ENCODE measurements at regions of chr18 and their contacts with region 1.

Region 1: DNA sequence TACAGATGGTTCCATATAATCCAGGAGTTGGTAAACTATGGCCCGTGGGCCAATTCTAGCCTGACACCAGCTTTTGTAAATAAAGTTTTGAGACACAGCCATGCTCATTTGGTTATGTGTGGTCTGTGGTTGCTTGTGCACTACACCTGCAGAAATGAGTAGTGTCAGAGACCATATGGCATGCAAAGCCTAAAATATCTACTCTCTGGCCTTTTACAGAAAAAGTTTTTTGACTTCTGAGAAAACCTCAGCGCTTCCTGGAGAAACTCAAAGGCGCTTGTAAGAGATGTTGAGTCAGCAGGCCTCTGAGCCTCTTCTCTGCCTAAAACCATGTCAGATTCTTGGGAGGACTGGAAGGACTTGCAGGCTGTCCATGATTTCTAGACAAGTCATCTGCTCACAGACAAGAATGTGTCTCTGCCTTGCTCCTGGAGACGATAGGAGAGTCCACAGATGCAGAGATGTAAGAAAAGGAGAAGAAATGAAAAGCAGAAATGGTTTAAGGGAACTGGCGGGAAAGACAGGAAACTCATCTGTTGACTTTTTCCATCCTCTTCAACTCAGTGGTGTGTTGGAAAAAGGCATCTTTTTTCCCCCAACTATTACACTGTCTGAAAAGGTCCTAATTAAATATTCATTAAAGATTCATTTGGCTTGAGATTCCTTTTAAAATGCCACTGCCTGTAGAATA is 5.2 kb downstream of the TTC39C start:
- DNase-seq: peak; percentile 91
- H3K4me3 ChIP-seq: peak overlapping the region; percentile 86
- H3K27ac ChIP-seq: peak overlapping the region; percentile 83
- H3K4me1 ChIP-seq: peaks cover 78% of the 10 kb centered on the region
- CTCF ChIP-seq: no peak

Region 2: DNA sequence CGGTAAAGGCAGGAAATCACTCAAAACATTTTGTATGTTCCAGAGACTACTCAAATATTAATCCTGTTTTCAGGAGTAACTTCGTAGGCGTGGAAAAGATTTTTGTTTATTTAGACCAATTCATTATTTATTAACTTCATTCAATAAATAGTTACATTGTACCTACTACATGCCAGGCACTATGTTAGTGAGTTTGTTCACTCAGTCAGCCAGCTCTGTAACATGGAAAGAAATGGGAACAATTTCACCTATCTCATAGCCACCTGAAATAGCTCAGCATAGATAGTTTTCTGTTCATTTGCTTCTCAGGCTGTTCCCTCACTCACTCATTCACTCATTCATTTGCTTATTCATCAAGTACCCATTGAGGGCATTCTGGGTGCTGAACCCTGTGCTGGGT is 29.4 kb after region 1 on chr18:
- CTCF ChIA-PET with region 1: no interaction called
- POLR2A ChIA-PET with region 1: no interaction called
- intact Hi-C with region 1: loop called (anchors 2 kb)
- DNase-seq: no peak
- H3K4me3 ChIP-seq: no peak overlapping the region
- H3K27ac ChIP-seq: no peak overlapping the region
- H3K4me1 ChIP-seq: peaks cover 7% of the 10 kb centered on the region
- CTCF ChIP-seq: no peak

Region 3: DNA sequence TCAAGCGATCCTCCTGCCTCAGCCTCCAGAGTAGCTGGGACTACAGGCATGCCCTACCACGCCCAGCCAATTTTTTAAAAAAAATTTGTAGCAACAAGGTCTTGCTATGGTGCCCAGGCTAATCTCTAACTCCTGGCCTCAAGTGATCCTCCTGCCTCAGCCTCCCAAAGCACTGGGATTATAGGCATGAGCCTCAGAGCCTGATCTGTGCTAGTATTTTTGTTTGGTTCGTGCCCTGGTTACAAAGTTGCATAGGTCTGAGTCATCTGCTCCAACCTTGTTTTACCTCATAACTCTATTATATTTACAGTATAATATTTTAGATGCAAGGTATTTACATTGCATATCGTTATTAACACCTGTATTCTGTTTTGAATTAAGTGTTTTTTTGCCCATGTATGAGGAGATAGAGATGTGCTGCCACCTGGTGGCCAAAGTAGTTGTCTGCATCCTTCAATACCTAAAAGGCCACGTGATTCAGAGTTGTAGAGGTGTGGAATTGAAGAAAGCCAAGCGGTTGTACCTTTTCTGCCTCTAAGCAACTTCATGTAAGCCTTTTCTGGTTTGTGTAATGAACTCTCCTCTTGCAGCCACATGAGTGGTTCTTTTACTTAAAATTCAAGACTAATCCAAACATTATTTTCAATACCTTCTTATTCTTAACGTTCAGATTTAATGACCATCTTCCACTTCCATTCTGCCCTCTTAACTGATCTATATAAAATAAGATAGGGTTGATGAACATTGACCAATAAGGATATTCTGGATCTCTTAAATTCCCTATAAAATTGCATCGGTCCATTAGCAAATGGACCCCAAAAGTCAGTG is 99.2 kb after region 1 on chr18:
- CTCF ChIA-PET with region 1: no interaction called
- POLR2A ChIA-PET with region 1: no interaction called
- intact Hi-C with region 1: loop called (anchors 2 kb)
- DNase-seq: peak; percentile 82
- H3K4me3 ChIP-seq: no peak overlapping the region
- H3K27ac ChIP-seq: no peak overlapping the region
- H3K4me1 ChIP-seq: no peaks in the 10 kb centered on the region
- CTCF ChIP-seq: peak; percentile 96